Heart left ventricle (tissue), 16 donors: ENCODE measurements at regions of chr16 and their contacts with region 1.

Region 1: DNA sequence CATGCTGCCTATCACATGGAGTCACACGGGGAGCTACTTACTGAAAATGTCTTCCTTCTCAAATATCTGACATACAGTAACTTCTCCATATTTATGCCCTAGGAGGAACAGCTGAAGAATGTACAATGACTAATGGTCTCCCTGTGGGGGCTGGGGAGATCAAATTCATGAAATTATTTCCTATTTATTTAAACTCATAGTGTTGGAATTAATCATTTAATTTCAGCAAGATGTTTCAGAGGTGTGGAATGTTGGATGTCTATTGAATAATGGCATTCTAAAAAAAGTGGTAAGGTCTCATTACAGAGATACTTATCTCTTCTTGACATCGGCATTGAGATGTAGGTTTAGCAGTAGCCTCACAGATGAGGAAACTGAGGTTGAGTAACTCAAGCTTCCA is 214.3 kb upstream of the CDH11 start:
- DNase-seq: no peak
- ATAC-seq: no peak
- H3K4me3 ChIP-seq: no peak overlapping the region
- H3K27ac ChIP-seq: no peak overlapping the region
- H3K4me1 ChIP-seq: no peaks in the 10 kb centered on the region
- H3K27me3 ChIP-seq: no peaks in the 10 kb centered on the region
- CTCF ChIP-seq: no peak
- POLR2A ChIP-seq: no peak

Region 2: GRCh38 chr16:65136681-65137080 is 199.5 kb before region 1 on chr16:
- intact Hi-C with region 1: loop called in 1 of 10 experiments (anchors 10 kb)
- DNase-seq: no peak
- ATAC-seq: no peak
- H3K4me3 ChIP-seq: no peak overlapping the region
- H3K27ac ChIP-seq: no peak overlapping the region
- H3K4me1 ChIP-seq: no peaks in the 10 kb centered on the region
- H3K27me3 ChIP-seq: no peaks in the 10 kb centered on the region
- CTCF ChIP-seq: no peak
- POLR2A ChIP-seq: no peak